Heart left ventricle (tissue), 16 donors: ENCODE measurements at regions of chr7 and their contacts with region 1.

Region 1: GRCh38 chr7:148884299-148885022 is 370 bp upstream of the EZH2 start:
- DNase-seq: peak; percentile 93 to 97 (median 94)
- ATAC-seq: peak; percentile 98 to 100 (median 99)
- H3K4me3 ChIP-seq: peak overlapping the region; percentile 65 to 99 (median 93)
- H3K27ac ChIP-seq: peak overlapping the region; percentile 77 to 98 (median 92)
- H3K4me1 ChIP-seq: peaks cover 0 to 17% (median 4%) of the 10 kb centered on the region in 12 donors
- H3K27me3 ChIP-seq: no peaks in the 10 kb centered on the region
- CTCF ChIP-seq: no peak
- POLR2A ChIP-seq: peak in 1 of 2 donors; percentile 83

Region 2: GRCh38 chr7:148563583-148564274 is 320.7 kb before region 1 on chr7:
- intact Hi-C with region 1: loop called in 1 of 10 experiments (anchors 10 kb)
- DNase-seq: no peak
- ATAC-seq: no peak
- H3K4me3 ChIP-seq: peak overlapping the region in 1 of 12 donors; percentile 9
- H3K27ac ChIP-seq: peak overlapping the region in 10 of 12 donors; percentile 41 to 91 (median 58)
- H3K4me1 ChIP-seq: peaks cover 0 to 27% (median 2%) of the 10 kb centered on the region in 12 donors
- H3K27me3 ChIP-seq: no peaks in the 10 kb centered on the region
- CTCF ChIP-seq: no peak
- POLR2A ChIP-seq: no peak

Region 3: DNA sequence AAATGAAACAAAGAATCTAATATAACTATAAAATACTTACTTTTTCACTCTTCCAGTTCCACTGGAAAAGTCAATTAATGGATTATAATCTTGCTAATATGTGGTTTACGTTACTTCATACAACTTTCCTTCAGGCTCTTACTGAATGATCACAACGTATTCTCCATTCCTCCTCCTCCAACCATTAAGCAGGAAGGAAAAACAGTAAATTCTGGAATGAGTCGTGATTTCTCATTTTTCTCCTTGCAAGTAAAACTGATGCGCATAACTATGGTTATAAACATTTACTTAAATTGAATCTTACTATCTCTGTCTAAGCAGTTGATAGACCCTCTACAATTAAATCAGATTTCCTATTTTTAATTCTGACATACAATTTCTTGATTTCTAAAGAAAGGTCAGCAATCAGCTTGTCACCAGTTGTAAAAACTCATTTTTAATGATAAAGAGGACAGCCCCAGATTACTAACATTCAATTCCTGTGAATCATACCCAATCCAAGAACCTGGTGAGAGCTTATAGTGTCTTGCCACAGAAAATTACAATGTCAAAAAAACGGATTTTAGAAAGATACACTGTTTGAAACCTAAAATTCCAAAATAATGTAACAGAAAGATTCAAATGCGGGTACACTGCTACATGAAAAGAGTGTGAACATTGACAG is 64.6 kb before region 1 on chr7:
- intact Hi-C with region 1: no loop called
- DNase-seq: no peak
- ATAC-seq: no peak
- H3K4me3 ChIP-seq: no peak overlapping the region
- H3K27ac ChIP-seq: no peak overlapping the region
- H3K4me1 ChIP-seq: no peaks in the 10 kb centered on the region
- H3K27me3 ChIP-seq: no peaks in the 10 kb centered on the region
- CTCF ChIP-seq: no peak
- POLR2A ChIP-seq: no peak

Region 4: DNA sequence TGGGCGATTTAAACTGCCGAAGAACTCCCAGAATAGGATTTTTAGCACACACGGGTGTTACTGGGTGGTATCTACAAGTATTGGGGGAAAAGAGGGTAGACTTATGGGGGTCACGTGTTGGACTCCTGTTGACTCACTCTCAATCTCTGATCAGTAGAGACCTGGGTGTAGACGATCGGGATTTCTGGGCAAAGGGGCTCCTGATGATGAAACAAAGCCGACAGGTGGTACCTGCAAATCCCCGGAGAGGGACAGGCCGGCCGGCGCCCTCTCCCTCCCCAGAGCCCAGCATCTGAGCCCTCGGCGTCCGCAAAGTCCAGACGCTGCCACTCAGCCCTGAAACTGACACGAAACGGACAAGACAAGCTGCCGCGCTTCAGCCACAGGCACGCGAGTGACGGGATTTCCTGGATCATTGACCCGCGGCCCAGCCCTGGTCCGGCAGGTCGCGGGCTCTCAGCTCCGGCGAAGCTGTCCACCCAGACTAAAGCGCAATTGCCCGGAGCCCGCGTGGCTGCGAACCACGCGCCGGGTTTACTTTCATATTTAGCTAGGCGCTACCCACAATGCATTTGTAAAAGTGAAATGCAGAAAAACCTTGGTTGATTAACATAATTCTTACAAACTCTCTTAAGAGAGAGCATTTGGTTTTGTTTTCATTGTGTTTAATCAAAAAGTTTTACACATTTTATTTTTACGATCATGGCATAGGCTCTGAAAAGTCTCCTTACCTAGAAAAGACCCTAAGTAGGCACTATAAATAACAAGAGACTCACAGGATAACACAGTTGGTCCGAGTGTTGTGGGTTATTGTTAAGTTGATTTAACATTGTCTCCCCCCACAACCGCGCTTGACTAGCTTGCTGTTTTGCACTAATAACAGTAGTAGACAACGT is 56.5 kb after region 1 on chr7:
- intact Hi-C with region 1: loop called in 8 of 10 experiments (anchors 2 to 5 kb)
- DNase-seq: peak; percentile 79 to 90 (median 86)
- ATAC-seq: peak; percentile 88 to 98 (median 96)
- H3K4me3 ChIP-seq: peak overlapping the region; percentile 50 to 83 (median 72)
- H3K27ac ChIP-seq: peak overlapping the region; percentile 7 to 94 (median 74)
- H3K4me1 ChIP-seq: peaks cover 0 to 16% (median 5%) of the 10 kb centered on the region in 12 donors
- H3K27me3 ChIP-seq: no peaks in the 10 kb centered on the region
- CTCF ChIP-seq: peak in 1 of 12 donors; percentile 15
- POLR2A ChIP-seq: peak in 1 of 2 donors; percentile 42

Region 5: DNA sequence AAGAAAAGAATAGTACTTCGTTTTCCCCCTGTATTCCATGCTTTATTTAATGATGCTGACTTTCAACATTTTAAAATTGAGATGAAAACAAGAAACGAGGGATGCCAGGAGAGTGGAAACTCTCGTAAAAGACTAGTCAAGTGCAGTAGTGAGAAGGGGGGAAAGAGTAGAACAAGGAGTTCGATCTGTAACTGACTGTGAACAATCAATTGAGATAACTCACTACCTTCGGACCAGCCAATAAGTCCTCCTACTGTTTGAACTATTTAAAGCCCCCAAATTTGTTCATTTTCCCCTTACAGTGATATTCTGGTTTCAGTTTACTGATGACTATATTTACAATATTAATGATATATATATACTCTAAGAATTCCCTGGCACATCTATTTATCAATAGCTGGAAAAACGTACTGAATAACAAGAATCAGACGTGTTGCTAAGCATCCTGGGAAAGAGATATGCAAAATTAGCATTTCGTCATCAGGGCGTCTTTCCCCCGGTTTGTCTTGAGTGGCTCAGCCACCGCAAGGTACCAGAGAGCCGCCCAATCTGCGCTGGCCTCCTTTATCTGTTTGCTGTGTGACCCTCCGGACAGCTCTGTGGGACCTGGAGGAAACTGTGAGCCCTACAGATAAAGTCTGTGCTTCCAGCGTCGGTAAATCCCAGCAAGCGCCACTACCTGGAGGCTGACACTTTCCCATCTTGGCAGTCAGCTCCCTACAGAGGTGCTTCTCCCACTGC is 102.7 kb after region 1 on chr7:
- intact Hi-C with region 1: loop called in 1 of 10 experiments (anchors 5 kb)
- DNase-seq: peak; percentile 77 to 85 (median 81)
- ATAC-seq: peak; percentile 92
- H3K4me3 ChIP-seq: peak overlapping the region; percentile 56 to 84 (median 71)
- H3K27ac ChIP-seq: peak overlapping the region; percentile 53 to 92 (median 77)
- H3K4me1 ChIP-seq: peaks cover 4 to 53% (median 25%) of the 10 kb centered on the region in 12 donors
- H3K27me3 ChIP-seq: no peaks in the 10 kb centered on the region
- CTCF ChIP-seq: no peak
- POLR2A ChIP-seq: peak in 1 of 2 donors; percentile 37

Region 6: DNA sequence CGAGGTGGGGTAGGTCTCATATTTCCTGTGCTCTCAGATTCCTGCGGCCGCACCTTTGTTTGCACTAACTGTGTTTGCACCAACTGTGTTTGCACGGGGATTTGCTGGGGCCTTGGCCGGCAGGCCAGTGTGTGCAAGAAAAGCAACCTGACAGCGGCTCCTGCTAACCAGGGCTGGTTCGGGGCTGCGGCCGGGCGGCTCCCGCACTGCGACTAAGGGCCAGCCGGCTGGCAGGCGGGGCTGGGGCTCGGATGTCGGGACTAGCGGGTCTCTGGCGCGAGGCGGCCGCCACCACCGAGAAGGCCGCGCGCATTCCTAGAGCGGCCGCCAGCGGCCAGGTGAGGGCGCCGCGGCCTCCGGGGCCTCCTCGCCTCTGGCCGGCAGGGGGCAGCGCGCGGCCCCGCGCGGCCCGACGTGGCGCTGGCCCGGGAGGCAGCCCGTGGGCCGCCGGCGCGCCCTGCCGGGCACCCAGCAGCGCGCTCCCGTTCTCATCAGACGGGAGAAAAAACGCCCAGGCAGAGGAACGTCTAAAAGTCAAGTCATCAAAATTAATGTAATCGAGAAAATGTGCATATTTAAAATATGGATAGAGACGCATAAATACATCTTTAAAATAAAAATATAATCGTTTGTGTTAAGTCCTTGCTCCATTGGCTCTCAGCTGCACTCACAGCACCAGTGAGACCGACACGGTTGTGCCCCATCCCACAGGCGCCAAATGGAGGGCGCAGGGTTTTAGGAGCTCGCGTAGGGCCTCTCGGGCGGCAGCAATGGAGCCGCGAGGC is 537.9 kb after region 1 on chr7:
- intact Hi-C with region 1: no loop called
- DNase-seq: peak; percentile 60 to 85 (median 61)
- ATAC-seq: peak; percentile 60 to 97 (median 93)
- H3K4me3 ChIP-seq: peak overlapping the region; percentile 29 to 65 (median 54)
- H3K27ac ChIP-seq: peak overlapping the region in 7 of 12 donors; percentile 3 to 77 (median 33)
- H3K4me1 ChIP-seq: peaks cover 0 to 18% (median 7%) of the 10 kb centered on the region in 12 donors
- H3K27me3 ChIP-seq: no peaks in the 10 kb centered on the region
- CTCF ChIP-seq: peak; percentile 1 to 84 (median 52)
- POLR2A ChIP-seq: no peak